ENCODE measurements at regions of chr15 and their contacts with region 1.

Region 1: DNA sequence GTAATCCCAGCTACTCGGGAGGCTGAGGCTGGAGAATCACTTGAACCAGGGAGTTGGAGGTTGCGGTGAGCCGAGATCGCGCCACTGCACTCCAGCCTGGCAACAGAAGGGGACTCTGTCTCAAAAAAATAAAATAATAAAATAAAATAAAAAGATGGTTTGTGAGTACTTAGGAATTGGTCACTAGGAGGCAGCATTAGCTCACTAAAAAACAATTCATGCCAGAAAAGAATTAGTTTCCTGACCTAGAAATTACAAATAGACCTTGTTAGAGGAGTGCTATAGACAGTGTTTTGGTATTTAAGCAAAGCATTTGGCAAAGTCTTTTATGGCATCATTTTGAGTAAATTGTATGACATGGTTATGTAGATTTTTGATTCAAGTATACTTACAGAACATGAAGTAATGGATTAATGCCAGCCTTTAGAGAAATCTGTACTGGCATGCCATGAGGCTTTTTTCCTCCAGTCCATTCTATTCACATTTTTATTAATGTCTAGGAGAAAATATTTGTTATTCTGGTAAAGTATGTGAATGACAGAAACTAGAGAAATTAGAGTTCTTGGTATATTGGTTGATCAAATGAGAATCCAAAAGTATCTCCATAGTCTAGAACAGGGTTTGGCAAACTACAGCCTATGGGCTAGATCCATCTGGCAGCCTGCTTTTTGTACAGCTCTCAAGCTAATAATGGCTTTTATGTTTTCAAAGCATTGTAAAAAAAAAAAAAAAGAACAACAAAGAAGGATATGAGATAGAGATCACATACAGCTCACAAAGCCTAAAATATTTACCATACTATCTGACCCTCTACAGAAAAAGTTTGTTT is 81.6 kb downstream of the LRRC49 start:
- DNase-seq: no peak
- H3K4me3 Mint-ChIP-seq: no peak overlapping the region
- H3K27ac Mint-ChIP-seq: no peak overlapping the region
- H3K4me1 Mint-ChIP-seq: no peaks in the 10 kb centered on the region
- H3K27me3 Mint-ChIP-seq: no peaks in the 10 kb centered on the region

Region 2: GRCh38 chr15:69679623-69680228 is 1294.5 kb before region 1 on chr15:
- intact Hi-C with region 1: no loop called
- DNase-seq: peak; percentile 6
- H3K4me3 Mint-ChIP-seq: no peak overlapping the region
- H3K27ac Mint-ChIP-seq: no peak overlapping the region
- H3K4me1 Mint-ChIP-seq: peaks cover 19% of the 10 kb centered on the region
- H3K27me3 Mint-ChIP-seq: peaks cover 22% of the 10 kb centered on the region

Region 3: DNA sequence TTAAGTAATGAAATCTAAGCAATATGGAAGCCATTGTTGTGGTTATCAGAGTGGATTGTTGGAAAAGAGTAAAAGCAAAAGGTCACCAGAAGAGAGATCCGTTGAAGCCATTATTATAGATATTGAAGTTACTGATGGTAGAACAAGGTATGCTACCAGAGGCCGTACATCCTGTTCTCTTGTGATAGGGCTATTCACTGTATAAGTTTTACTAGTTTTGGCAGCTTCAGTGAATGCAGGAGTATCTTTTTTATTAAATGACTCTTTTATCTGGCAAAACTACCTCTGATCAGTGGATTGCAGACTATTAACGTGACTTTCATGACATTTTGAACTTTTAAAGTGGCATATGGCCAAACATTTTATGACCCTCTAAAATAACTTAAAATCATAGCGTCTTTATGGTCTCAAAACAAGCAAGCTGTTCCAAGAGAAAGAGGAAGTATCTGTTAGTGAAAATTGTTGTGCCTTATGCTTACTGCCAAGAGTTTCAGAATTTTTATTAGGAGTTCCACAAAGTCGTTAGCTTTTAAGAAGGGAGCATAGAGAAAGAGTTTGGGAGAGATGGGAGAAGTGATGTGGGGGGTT is 21.3 kb after region 1 on chr15:
- intact Hi-C with region 1: no loop called
- DNase-seq: no peak
- H3K4me3 Mint-ChIP-seq: no peak overlapping the region
- H3K27ac Mint-ChIP-seq: no peak overlapping the region
- H3K4me1 Mint-ChIP-seq: no peaks in the 10 kb centered on the region
- H3K27me3 Mint-ChIP-seq: peaks cover 12% of the 10 kb centered on the region

Region 4: DNA sequence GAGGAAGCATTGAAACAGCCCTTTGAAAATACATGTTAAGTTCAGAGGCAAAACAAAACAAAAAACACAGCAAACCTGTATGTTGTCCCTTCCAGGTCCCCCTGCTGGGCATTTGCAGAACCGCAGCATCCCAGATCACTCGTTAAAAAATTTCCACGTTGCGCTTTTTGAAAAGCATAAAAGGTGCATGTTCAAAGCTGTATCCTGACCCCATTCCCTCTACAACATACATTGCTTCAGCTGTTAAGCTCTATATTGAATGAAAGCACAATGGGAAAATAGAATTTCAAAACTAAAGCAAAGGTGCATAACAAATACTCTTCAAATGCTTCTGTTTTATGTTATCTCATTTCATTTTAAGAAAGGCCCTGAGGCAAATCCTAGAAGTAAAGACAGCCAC is 469.3 kb after region 1 on chr15:
- intact Hi-C with region 1: loop called (anchors 5 kb)
- DNase-seq: no peak
- H3K4me3 Mint-ChIP-seq: no peak overlapping the region
- H3K27ac Mint-ChIP-seq: no peak overlapping the region
- H3K4me1 Mint-ChIP-seq: no peaks in the 10 kb centered on the region
- H3K27me3 Mint-ChIP-seq: no peaks in the 10 kb centered on the region